A673 (cell line): ENCODE measurements at regions of chr1 and their contacts with region 1.

Region 1: DNA sequence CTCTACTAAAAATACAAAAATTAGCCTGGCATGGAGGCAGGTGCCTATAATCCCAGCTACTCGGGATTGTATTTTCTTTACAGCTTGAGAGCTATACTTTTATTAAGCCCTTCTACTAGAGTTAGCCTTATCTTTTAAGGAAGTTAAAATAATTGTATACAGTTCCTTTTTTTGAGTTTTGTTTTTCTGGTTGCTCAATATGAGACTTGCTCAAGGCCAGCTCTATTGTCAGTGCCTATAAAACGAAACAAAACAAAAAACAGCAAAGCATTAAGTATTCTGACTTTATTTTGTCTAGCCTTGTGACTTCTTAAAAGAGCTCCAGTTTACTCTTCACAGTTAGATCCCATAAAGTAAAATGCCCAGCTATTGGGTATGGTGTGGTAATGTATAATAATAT is 17.2 kb downstream of the PKN2 start:
- DNase-seq: no peak
- H3K4me3 ChIP-seq: no peak overlapping the region
- H3K27ac ChIP-seq: no peak overlapping the region
- H3K4me1 ChIP-seq: peaks cover 16% of the 10 kb centered on the region
- H3K27me3 ChIP-seq: no peaks in the 10 kb centered on the region
- CTCF ChIP-seq: no peak

Region 2: DNA sequence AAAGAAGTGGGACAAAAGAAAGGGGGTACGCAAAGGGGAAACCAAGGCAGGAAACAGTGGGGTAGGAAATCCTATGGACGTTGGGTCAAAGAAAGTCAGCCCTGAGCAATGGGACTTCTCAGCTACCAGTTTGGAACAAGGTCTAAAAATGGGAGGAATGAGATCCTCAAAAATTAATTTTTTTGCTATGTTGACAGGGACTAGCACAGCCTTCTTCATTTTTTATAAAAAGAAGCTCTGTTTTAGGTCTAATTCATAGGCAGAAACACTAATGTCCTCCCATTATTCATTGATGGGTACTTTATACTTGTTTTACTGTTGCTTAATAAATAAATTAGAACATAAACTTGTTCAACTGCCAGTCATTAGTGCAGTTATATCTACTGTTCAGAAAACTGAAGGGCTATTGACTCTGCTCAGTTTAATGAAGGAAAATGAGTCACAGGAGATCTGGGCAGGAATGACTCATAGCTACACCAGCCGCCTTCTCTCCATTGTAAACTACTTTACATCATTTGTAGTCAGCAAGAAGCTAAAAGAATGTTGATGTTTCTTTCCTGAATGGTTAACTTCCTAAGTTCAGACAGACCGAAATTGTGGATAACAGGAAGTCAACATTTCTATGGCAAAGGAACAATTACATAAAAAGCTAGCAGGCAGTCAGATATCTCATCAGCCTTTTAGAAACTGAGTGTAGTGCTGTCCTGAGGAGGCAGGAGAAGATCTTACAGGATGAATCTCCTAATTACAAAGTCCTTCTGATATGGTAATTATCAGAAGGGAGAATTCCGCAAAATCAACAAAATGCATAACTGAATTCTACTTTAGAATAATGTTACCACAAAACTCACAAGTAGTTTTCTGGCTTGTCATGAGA is 373.6 kb before region 1 on chr1:
- CTCF ChIA-PET with region 1: no interaction called
- POLR2A ChIA-PET with region 1: no interaction called
- intact Hi-C with region 1: no loop called
- DNase-seq: peak; percentile 93
- H3K4me3 ChIP-seq: no peak overlapping the region
- H3K27ac ChIP-seq: no peak overlapping the region
- H3K4me1 ChIP-seq: peaks cover 19% of the 10 kb centered on the region
- H3K27me3 ChIP-seq: no peaks in the 10 kb centered on the region
- CTCF ChIP-seq: no peak

Region 3: GRCh38 chr1:88655685-88656299 is 45.5 kb before region 1 on chr1:
- CTCF ChIA-PET with region 1: interaction called, 13 read pairs
- POLR2A ChIA-PET with region 1: no interaction called
- intact Hi-C with region 1: no loop called
- DNase-seq: peak; percentile 36
- H3K4me3 ChIP-seq: no peak overlapping the region
- H3K27ac ChIP-seq: no peak overlapping the region
- H3K4me1 ChIP-seq: no peaks in the 10 kb centered on the region
- H3K27me3 ChIP-seq: no peaks in the 10 kb centered on the region
- CTCF ChIP-seq: peak; percentile 74

Region 4: DNA sequence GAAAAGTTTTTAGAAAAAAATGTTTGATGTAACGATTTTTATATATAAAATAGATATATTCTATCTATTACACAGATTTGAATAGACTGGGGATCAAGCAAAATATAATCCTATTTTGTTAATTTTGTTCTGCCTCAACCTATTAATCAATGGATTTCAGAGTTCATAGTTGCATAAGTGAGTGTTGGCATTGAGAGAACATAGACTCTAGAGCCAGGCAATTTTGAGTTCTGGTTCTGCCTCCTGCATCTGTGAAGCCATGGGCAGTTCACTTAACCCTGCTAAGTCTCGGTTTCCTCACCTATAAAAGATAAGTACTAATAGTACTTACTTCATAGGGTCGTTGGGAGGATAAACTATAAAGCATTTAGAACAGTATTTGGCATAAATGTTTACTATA is 30.8 kb before region 1 on chr1:
- CTCF ChIA-PET with region 1: no interaction called
- POLR2A ChIA-PET with region 1: no interaction called
- intact Hi-C with region 1: no loop called
- DNase-seq: no peak
- H3K4me3 ChIP-seq: no peak overlapping the region
- H3K27ac ChIP-seq: no peak overlapping the region
- H3K4me1 ChIP-seq: no peaks in the 10 kb centered on the region
- H3K27me3 ChIP-seq: no peaks in the 10 kb centered on the region
- CTCF ChIP-seq: no peak

Region 5: DNA sequence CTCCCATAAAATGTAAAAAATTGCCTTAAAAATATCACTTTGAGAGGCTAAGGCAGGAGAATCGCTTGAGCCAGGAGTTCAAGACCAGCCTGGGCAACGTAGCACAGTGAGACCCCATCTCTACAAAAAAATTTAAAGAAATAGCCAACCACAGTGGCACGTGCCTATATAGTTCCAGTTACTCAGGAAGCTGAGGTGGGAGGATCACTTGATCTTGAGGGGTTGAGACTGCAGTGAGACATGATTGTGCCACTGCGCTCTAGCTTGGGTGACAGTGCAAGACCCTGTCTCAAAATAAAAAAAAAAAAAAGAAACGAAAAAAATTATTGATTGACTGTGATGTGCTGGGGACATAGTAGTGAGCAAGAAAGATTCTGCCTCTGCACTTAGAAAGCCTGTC is 21.2 kb after region 1 on chr1:
- CTCF ChIA-PET with region 1: no interaction called
- POLR2A ChIA-PET with region 1: no interaction called
- intact Hi-C with region 1: no loop called
- DNase-seq: no peak
- H3K4me3 ChIP-seq: no peak overlapping the region
- H3K27ac ChIP-seq: no peak overlapping the region
- H3K4me1 ChIP-seq: no peaks in the 10 kb centered on the region
- H3K27me3 ChIP-seq: no peaks in the 10 kb centered on the region
- CTCF ChIP-seq: no peak